ENCODE measurements at regions of chr2 and their contacts with region 1.

Region 1: DNA sequence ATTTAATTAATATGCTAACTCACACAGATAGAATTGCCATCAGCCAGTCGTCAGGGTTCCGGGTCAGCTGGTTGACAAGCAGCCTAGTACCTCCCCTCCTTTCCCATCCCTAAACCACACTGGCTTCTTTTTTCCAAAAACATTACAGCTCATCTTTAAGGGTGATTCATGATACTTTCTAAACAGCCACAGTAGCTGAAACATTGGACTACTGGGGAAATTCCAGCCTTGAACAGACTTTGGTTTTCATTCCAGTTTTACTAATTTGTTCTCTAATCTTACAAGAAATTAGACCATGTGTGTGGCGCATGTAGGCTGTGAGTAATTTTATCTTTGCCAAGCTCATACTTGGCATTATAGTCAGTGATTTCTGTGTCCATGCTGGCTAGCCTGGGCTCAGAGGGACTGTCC is 110.8 kb downstream of the FMNL2 start:
- DNase-seq: peak in 3 of 5 donors; percentile 37 to 42 (median 37)
- H3K4me3 ChIP-seq: no peak overlapping the region
- H3K27ac ChIP-seq: peak overlapping the region in 1 of 2 donors; percentile 22
- H3K4me1 ChIP-seq: peaks cover 9% of the 10 kb centered on the region
- H3K27me3 ChIP-seq: no peaks in the 10 kb centered on the region
- CTCF ChIP-seq: no peak
- EP300 ChIP-seq: no peak
- POLR2A ChIP-seq: no peak

Region 2: GRCh38 chr2:152499896-152500735 is 54.3 kb after region 1 on chr2:
- intact Hi-C with region 1: loop called in 1 of 4 experiments (anchors 10 kb)
- DNase-seq: no peak
- H3K4me3 ChIP-seq: no peak overlapping the region
- H3K27ac ChIP-seq: peak overlapping the region in 1 of 2 donors; percentile 24
- H3K4me1 ChIP-seq: peaks cover 13% of the 10 kb centered on the region
- H3K27me3 ChIP-seq: no peaks in the 10 kb centered on the region
- CTCF ChIP-seq: no peak
- EP300 ChIP-seq: no peak
- POLR2A ChIP-seq: no peak

Region 3: DNA sequence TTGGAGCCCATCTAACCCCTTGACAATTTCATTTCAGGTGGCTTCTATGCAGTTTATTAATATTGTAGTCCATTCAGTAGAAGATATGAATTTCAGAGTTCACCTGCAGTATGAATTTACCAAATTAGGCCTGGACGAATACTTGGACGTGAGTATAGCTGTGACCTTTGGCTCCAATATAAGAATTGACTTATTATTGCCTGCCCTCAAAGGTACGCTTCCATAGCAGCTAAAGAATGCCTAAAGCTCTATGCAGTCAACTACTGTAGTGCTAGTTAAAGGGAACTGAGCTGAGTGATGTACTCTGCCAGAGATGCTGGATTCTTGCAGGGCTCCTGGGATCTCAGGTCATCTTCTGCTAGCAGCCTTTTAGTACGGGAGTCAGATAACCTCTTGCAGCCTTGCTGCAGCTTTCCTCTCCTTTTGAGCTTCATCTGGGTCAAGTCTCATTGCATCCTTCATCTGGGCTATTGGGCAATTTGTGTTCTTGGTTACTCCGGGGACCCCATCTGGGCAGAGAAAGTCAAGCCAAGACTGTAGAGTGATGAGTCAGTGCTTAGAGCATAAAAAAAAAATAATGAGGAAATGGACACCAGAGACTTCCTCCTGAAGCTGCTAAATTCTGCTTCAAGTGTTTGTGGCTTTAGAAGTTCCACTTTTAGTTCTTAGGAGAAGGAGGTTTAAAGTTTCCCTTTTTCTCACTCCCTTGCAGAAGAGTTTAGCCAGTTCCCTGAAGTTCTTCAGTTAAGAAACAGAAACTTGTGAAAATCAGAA is 165.8 kb after region 1 on chr2:
- intact Hi-C with region 1: no loop called
- DNase-seq: peak in 2 of 5 donors; percentile 45 to 67
- H3K4me3 ChIP-seq: no peak overlapping the region
- H3K27ac ChIP-seq: no peak overlapping the region
- H3K4me1 ChIP-seq: peaks cover 6% of the 10 kb centered on the region
- H3K27me3 ChIP-seq: no peaks in the 10 kb centered on the region
- CTCF ChIP-seq: no peak
- EP300 ChIP-seq: no peak
- POLR2A ChIP-seq: no peak